ENCODE measurements at regions of chr6 and their contacts with region 1.

Region 1: DNA sequence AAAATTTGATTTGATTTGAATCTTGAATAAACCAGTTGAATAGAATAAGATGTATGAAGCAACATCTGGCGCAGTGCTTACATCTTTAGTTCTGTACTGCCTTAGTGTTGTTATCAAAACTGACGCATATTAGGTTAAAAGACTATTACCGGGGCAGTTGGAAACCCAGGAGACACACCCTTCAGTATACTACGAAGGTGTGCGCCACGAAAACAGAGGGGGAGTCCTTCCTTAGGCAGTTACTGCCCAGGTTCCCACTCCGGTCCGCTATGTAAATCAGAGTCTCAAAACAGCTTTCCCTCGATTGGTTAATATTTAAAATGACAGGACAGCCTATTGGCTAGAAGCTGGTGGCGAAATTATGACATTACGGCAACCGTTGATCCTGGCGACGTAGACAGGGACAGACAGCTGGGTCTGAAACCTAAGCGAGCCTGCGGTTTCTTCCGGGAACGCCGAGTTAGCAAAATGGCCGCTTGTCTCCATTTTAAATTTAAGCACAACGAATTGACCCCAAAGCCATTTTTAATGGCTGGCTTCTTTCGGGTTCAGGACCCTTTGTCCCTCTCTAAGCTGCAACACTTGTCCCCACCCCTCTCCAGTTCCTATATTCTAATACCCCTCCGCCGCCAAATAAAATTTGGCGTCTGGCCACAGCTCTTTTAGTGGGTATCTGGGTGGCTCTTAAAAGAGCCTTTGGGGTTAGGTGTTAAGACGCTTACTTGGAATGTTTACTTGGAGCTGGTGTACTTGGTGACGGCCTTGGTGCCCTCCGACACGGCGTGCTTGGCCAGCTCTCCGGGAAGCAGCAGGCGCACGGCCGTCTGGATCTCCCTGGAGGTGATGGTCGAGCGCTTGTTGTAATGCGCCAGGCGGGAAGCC is 35.8 kb downstream of the HFE start:
- DNase-seq: peak; percentile 97
- H3K4me3 Mint-ChIP-seq: peak overlapping the region; percentile 96
- H3K27ac Mint-ChIP-seq: peak overlapping the region; percentile 99
- H3K4me1 Mint-ChIP-seq: peaks cover 44% of the 10 kb centered on the region
- H3K27me3 Mint-ChIP-seq: peaks cover 5% of the 10 kb centered on the region

Region 2: DNA sequence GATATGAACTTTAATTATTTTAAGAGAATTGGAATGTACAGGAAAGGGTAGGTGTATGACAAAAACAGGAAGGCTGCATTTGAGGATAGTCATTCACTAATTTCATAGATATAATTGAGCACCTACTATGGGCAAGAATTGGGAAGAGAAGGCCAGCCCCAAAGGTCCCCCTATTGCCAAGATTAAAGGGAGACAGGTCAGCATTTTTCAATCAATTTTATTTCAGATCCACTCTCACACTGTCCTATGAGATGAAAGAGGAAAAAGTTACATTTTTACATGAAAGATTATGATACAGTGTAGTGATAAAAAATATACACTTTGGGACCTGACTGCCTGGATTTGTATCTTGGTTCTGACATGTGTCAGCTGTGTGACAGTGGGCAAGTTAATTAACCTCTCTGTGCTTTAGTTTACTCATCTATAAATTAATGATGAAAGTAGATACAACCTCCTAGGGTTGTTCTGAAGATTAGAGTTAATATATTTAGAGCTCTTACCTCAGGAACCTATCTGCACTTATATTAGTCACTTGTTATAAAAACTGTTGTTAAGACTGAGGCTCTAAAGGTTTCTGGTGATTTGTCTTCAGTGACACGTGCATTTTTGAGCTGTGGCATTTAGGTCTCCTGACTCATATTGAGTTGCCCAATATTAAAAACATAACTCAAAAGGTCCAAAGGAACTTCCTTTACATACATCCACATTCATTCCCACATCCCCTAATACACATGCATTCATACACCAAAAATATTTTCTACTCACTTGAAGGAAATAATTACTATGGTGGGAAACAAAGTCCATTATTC is 425.3 kb before region 1 on chr6:
- intact Hi-C with region 1: no loop called
- DNase-seq: no peak
- H3K4me3 Mint-ChIP-seq: no peak overlapping the region
- H3K27ac Mint-ChIP-seq: no peak overlapping the region
- H3K4me1 Mint-ChIP-seq: no peaks in the 10 kb centered on the region
- H3K27me3 Mint-ChIP-seq: peaks cover 10% of the 10 kb centered on the region

Region 3: GRCh38 chr6:26065952-26066380 is 57.1 kb before region 1 on chr6:
- intact Hi-C with region 1: loop called (anchors 2 kb)
- DNase-seq: peak; percentile 89
- H3K4me3 Mint-ChIP-seq: no peak overlapping the region
- H3K27ac Mint-ChIP-seq: peak overlapping the region; percentile 2
- H3K4me1 Mint-ChIP-seq: peaks cover 4% of the 10 kb centered on the region
- H3K27me3 Mint-ChIP-seq: peaks cover 34% of the 10 kb centered on the region

Region 4: GRCh38 chr6:26097268-26097875 is 25.7 kb before region 1 on chr6:
- intact Hi-C with region 1: no loop called
- DNase-seq: peak; percentile 91
- H3K4me3 Mint-ChIP-seq: no peak overlapping the region
- H3K27ac Mint-ChIP-seq: no peak overlapping the region
- H3K4me1 Mint-ChIP-seq: peaks cover 12% of the 10 kb centered on the region
- H3K27me3 Mint-ChIP-seq: peaks cover 10% of the 10 kb centered on the region

Region 5: GRCh38 chr6:26175428-26176181 is 52.6 kb after region 1 on chr6:
- intact Hi-C with region 1: loop called (anchors 1 kb)
- DNase-seq: peak; percentile 91
- H3K4me3 Mint-ChIP-seq: peak overlapping the region; percentile 40
- H3K27ac Mint-ChIP-seq: peak overlapping the region; percentile 63
- H3K4me1 Mint-ChIP-seq: peaks cover 45% of the 10 kb centered on the region
- H3K27me3 Mint-ChIP-seq: no peaks in the 10 kb centered on the region

Region 6: DNA sequence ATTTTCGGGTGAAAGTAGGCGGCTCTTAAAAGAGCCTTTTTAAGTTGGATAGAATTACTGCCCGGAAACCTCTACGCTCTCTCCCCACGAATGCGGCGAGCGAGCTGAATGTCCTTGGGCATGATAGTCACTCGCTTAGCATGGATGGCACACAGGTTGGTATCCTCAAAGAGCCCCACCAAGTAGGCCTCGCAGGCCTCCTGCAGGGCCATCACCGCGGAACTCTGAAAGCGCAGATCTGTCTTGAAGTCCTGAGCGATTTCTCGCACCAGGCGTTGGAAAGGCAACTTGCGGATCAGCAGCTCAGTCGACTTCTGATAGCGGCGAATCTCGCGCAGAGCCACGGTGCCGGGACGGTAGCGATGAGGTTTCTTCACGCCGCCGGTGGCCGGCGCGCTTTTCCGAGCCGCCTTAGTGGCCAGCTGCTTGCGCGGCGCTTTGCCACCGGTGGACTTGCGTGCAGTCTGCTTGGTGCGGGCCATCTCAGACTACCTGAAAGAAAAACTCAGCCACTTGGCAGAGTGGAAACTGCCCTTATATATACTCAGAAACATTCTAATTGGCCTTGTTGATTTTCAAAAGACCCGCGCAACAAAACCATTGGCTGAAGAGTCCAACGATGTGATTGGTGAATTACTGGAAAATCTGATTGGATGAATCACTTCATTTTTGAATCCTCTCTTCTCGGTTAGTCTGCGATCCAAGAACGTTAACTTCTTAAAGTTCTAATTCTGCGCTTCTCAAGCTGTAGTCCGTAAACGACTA is 148.1 kb after region 1 on chr6:
- intact Hi-C with region 1: loop called (anchors 5 kb)
- DNase-seq: peak; percentile 95
- H3K4me3 Mint-ChIP-seq: no peak overlapping the region
- H3K27ac Mint-ChIP-seq: no peak overlapping the region
- H3K4me1 Mint-ChIP-seq: peaks cover 28% of the 10 kb centered on the region
- H3K27me3 Mint-ChIP-seq: no peaks in the 10 kb centered on the region

Region 7: GRCh38 chr6:27838058-27838944 is 1715.3 kb after region 1 on chr6:
- intact Hi-C with region 1: loop called (anchors 10 kb)
- DNase-seq: peak; percentile 96
- H3K4me3 Mint-ChIP-seq: no peak overlapping the region
- H3K27ac Mint-ChIP-seq: no peak overlapping the region
- H3K4me1 Mint-ChIP-seq: peaks cover 28% of the 10 kb centered on the region
- H3K27me3 Mint-ChIP-seq: no peaks in the 10 kb centered on the region